ENCODE measurements at regions of chr20 and their contacts with region 1.

Region 1: GRCh38 chr20:57398231-57398821 is 7.1 kb downstream of the RBM38 start:
- DNase-seq: peak; percentile 92
- H3K4me3 Mint-ChIP-seq: peak overlapping the region; percentile 86
- H3K27ac Mint-ChIP-seq: peak overlapping the region; percentile 95
- H3K4me1 Mint-ChIP-seq: peaks cover 69% of the 10 kb centered on the region
- H3K27me3 Mint-ChIP-seq: no peaks in the 10 kb centered on the region

Region 2: DNA sequence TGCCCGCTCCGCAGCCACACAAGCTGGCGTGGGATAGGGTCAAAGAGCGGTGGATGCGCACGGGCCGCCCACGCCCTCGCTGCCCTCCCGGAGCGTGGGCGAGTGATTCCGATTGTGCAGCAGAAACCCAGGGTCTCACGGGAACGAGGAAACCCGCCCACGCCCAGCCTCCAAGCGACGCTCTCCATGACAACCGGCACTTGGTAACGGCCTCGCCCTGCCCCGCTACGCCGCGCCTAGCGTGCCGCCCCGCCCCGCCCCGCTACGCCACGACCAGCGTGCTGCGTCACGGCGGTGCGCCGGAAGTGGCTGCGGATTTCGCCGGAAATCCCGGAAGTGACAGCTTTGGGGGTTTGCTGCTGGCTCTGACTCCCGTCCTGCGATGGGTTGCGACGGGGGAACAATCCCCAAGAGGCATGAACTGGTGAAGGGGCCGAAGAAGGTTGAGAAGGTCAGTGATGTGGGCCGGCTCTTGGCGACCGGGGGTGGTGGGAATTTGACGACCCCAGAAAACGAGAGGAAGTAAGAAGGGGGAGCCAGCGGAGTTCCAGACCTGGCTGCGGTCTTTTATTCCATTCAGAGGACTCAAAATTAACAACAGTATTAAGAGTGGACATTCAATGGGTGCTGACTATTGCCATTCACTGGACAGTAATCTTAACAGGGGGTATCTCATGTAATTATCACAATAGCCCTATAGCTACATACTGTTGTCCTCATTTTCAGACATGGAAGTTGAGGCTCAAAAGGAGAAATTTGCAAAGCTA is 929.8 kb before region 1 on chr20 and contains the start of gene RTF2:
- intact Hi-C with region 1: loop called (anchors 5 kb)
- DNase-seq: peak; percentile 100
- H3K4me3 Mint-ChIP-seq: peak within 1 kb of the TSS; percentile 98
- H3K27ac Mint-ChIP-seq: peak within 1 kb of the TSS; percentile 99
- H3K4me1 Mint-ChIP-seq: peaks cover 37% of the 10 kb centered on the region
- H3K27me3 Mint-ChIP-seq: peaks cover 2% of the 10 kb centered on the region
- total RNA-seq, gene RTF2: 92.3 and 96.5 TPM in 2 replicates

Region 3: GRCh38 chr20:57374931-57375651 is 23.2 kb before region 1 on chr20:
- intact Hi-C with region 1: no loop called
- DNase-seq: no peak
- H3K4me3 Mint-ChIP-seq: no peak overlapping the region
- H3K27ac Mint-ChIP-seq: peak overlapping the region; percentile 24
- H3K4me1 Mint-ChIP-seq: peaks cover 6% of the 10 kb centered on the region
- H3K27me3 Mint-ChIP-seq: no peaks in the 10 kb centered on the region

Region 4: GRCh38 chr20:57421253-57422220 is 23.2 kb after region 1 on chr20:
- intact Hi-C with region 1: no loop called
- DNase-seq: no peak
- H3K4me3 Mint-ChIP-seq: no peak overlapping the region
- H3K27ac Mint-ChIP-seq: no peak overlapping the region
- H3K4me1 Mint-ChIP-seq: peaks cover 17% of the 10 kb centered on the region
- H3K27me3 Mint-ChIP-seq: peaks cover 12% of the 10 kb centered on the region

Region 5: GRCh38 chr20:57432874-57433491 is 34.7 kb after region 1 on chr20:
- intact Hi-C with region 1: loop called (anchors 2 kb)
- DNase-seq: peak; percentile 93
- H3K4me3 Mint-ChIP-seq: peak overlapping the region; percentile 66
- H3K27ac Mint-ChIP-seq: peak overlapping the region; percentile 84
- H3K4me1 Mint-ChIP-seq: peaks cover 51% of the 10 kb centered on the region
- H3K27me3 Mint-ChIP-seq: no peaks in the 10 kb centered on the region

Measured in activated CD4-positive, alpha-beta T cell treated with anti-CD3 and anti-CD28 coated beads, Interleukin-2, amount 10 ng/mL, durations not matched to agents 24 days and 14 days (primary cell).